ENCODE measurements at regions of chr3 and their contacts with region 1.

Region 1: DNA sequence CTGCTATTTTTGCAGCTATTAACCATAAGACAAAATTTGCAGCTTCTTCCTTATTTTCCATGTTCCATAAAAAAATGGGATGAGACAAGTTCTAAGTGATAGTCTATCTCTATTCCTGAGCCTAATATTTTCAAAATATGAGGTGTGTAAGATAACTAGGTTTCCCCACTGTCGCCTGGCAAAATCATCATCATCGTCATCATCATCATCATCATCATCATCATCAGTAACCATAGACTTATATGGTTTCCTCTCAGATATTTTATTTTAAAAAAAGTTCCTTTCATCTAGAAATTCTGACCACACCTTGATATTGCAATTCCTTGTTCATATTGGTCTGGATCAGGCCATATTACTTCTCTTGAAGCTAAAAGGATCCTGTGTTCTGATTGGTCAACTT is 273.3 kb downstream of the GRM7 start:
- DNase-seq: no peak
- H3K4me3 ChIP-seq: no peak overlapping the region
- CTCF ChIP-seq: no peak

Region 2: DNA sequence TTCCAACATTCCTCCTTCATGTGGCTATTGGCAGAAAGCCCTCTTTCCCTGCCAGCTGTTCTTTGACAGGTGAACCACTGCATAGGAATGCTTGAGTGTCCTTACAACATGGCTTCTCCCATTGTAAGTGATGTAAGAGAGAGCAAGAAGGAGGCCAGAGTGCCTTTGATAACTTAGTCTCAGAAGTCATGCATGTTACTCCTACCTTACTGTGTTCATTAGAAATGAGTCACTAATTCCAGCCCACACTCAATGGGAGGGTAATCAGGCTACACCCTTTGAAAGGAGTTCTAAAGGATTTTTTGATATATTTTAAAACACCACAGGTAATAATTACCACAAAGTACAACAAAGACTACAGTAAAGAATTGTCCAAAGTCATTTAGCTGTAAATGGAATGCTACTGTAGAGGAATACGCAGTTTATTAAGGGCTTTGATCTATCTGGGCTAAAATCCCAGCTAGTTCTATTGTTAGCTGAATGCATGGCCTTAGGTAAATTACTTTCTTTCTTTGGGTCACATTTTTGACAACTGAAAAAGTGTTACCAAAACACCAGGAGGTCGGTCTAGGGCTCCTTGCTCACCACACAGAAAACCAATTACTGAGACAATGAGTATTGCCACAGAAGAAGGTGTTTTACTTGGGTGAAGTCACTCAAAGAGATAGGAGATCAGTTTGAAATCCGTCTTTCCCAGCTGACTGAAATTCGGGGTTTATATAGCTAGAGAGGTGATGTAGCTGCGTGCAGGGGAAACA is 118.4 kb before region 1 on chr3:
- in situ Hi-C with region 1: loop called (anchors 5 kb)
- DNase-seq: peak; percentile 75
- H3K4me3 ChIP-seq: no peak overlapping the region
- CTCF ChIP-seq: no peak

Region 3: GRCh38 chr3:7075901-7076300 is 58.3 kb before region 1 on chr3:
- in situ Hi-C with region 1: no loop called
- DNase-seq: no peak
- H3K4me3 ChIP-seq: no peak overlapping the region
- CTCF ChIP-seq: peak; percentile 38

Measured in astrocyte of the cerebellum (primary cell).